Naive thymus-derived CD4-positive, alpha-beta T cell (primary cell): ENCODE measurements at regions of chr19 and their contacts with region 1.

Region 1: DNA sequence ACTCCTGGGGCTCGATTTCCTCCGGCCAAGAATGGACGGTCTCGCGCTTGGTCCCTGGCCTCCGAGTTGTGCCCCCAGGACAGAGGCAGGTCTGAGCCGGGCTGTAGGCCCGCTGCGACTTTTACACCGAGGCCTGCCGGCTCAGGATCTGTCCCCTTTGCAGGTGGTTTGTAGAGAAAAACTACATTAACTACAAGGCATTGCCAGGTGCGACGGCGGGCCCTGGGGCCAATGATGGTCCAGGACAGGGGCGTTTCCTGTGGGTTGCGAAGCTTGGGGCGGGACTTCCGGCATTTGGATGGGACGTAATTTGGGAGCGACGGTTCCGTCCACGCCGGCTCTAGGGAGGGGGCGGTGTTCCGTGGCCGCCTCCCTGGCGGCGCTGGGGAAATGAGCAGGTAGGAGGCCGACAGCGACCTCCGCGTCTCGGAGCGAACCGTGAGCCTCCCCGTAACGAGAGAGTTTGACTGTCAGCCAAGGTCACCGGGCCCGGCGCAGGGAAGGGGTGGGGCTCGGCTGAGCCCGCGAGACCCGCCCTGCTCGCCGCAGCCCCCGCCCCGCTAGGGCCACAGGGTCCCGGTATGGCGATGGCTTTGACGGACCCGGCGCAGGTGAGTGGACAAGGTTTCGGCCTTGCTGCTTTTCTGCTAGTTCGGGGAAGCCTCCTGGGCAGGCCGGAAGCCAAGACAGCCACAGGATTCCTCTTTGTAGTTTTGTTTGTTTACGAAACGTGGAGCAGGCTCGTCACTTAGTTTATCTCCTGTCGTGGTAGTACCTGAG is at the start of gene ZNF805:
- DNase-seq: peak; percentile 82 to 96 (median 93)
- ATAC-seq: peak; percentile 97
- H3K4me3 ChIP-seq: peak within 1 kb of the TSS; percentile 73
- H3K4me3 Mint-ChIP-seq: peak within 1 kb of the TSS; percentile 88 to 97 (median 94)
- H3K27ac ChIP-seq: peak within 1 kb of the TSS; percentile 95
- H3K27ac Mint-ChIP-seq: peak within 1 kb of the TSS; percentile 96 to 99 (median 97)
- H3K4me1 ChIP-seq: peaks cover 19% of the 10 kb centered on the region in 2 donors
- H3K4me1 Mint-ChIP-seq: peaks cover 20 to 44% (median 36%) of the 10 kb centered on the region in 7 donors
- H3K27me3 ChIP-seq: no peaks in the 10 kb centered on the region
- H3K27me3 Mint-ChIP-seq: peaks cover 0 to 3% (median 0%) of the 10 kb centered on the region in 5 donors
- total RNA-seq, gene ZNF805: 12.0 to 26.2 (median 23.7) TPM

Region 2: GRCh38 chr19:56567274-56568120 is 673.0 kb before region 1 on chr19 and contains the start of gene ZNF470:
- CTCF ChIA-PET with region 1: no interaction called
- POLR2A ChIA-PET with region 1: no interaction called
- intact Hi-C with region 1: loop called in 1 of 2 experiments (anchors 1 kb)
- DNase-seq: peak; percentile 73 to 86 (median 80)
- ATAC-seq: peak; percentile 98
- H3K4me3 ChIP-seq: peak within 1 kb of the TSS; percentile 86
- H3K4me3 Mint-ChIP-seq: peak within 1 kb of the TSS; percentile 89 to 98 (median 96)
- H3K27ac ChIP-seq: peak within 1 kb of the TSS; percentile 77
- H3K27ac Mint-ChIP-seq: peak within 1 kb of the TSS; percentile 59 to 91 (median 84)
- H3K4me1 ChIP-seq: peaks cover 0 to 9% of the 10 kb centered on the region in 2 donors
- H3K4me1 Mint-ChIP-seq: peaks cover 10 to 25% (median 13%) of the 10 kb centered on the region in 7 donors
- H3K27me3 ChIP-seq: no peaks in the 10 kb centered on the region
- H3K27me3 Mint-ChIP-seq: no peaks in the 10 kb centered on the region
- total RNA-seq, gene ZNF470: 0.98 to 5.9 (median 2.4) TPM

Region 3: DNA sequence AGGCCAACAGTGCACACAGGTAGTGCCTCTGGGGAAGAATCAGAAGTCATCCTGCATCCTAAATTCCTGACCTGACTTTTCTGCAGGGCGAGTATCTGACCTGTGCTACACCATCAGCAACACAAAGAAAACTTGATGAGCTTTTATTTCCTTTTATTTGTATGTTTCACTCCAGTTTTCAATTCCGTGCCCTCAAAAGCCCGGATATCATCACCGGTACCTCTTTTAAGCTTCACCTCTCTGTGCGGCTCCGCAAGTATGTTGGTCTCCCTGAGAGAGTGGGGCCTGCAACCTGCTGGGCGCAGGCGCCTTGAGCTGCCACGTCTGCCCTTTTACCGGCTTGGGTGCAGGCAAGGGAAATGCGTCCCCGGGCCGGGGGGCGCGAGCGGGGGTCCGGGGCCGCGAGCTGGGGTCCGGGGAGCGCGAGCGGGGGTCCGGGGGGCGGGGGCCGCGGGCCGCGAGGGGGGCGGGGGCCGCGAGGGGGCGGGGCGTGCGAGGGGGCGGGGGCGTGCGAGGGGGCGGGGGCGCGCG is 68.9 kb before region 1 on chr19:
- CTCF ChIA-PET with region 1: no interaction called
- POLR2A ChIA-PET with region 1: no interaction called
- intact Hi-C with region 1: no loop called
- DNase-seq: peak in 4 of 9 donors; percentile 16 to 58 (median 22)
- ATAC-seq: peak; percentile 79
- H3K4me3 ChIP-seq: peak overlapping the region; percentile 34
- H3K4me3 Mint-ChIP-seq: peak overlapping the region; percentile 42 to 81 (median 68)
- H3K27ac ChIP-seq: no peak overlapping the region
- H3K27ac Mint-ChIP-seq: peak overlapping the region in 4 of 9 donors; percentile 14 to 79 (median 66)
- H3K4me1 ChIP-seq: peaks cover 0 to 7% of the 10 kb centered on the region in 2 donors
- H3K4me1 Mint-ChIP-seq: peaks cover 3 to 19% (median 13%) of the 10 kb centered on the region in 7 donors
- H3K27me3 ChIP-seq: no peaks in the 10 kb centered on the region
- H3K27me3 Mint-ChIP-seq: peaks cover 0 to 49% (median 36%) of the 10 kb centered on the region in 5 donors

Region 4: DNA sequence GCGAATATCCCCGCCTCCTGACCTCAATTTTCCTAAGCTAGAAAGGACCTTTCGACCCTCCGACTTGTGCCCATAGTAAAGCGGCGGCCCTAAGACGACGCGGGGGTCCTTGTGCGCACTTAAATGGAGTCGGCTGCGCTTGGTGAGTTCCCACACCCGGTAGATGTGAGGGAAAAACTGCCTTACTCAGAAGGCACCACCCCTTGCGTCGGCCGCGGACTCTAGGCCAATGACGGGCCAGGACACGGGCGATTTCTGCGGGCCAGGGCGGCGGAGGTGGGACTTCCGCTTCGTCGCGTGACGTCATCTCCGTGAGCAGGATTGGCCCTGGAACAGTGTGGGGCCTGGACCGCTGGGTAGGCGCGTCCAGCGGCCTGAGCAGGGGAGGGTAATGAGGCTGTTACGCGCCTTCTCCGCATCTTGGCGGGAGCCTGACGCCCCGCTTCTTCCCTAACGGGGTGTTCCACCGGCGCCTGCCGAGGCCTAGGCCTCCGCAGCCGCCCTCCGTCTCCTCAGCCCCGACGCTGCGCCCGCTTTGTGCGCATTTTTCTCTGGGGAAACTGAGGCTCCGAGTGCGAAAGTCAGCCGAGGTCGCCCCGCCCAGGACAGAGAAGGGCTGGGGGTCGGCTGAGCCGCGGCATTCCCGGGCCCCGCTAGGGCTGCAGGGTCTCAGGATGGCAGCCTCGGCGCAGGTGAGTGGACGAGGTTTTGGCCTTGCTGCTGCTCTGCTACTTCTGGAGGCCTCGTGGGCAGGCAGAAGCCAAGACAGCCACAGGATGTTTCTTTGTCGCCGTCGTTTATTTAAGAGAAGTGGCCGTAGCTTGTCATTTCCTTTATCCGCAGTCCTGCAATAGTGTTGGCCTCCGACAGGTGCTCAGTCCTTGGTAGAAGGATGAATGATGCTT is 79.9 kb after region 1 on chr19 and contains the start of gene ZNF543:
- CTCF ChIA-PET with region 1: no interaction called
- POLR2A ChIA-PET with region 1: no interaction called
- intact Hi-C with region 1: loop called (anchors 1 kb)
- DNase-seq: peak; percentile 78 to 90 (median 84)
- ATAC-seq: peak; percentile 98
- H3K4me3 ChIP-seq: peak within 1 kb of the TSS; percentile 76
- H3K4me3 Mint-ChIP-seq: peak within 1 kb of the TSS; percentile 87 to 98 (median 94)
- H3K27ac ChIP-seq: peak within 1 kb of the TSS; percentile 83
- H3K27ac Mint-ChIP-seq: peak within 1 kb of the TSS; percentile 82 to 98 (median 96)
- H3K4me1 ChIP-seq: peaks cover 0 to 18% of the 10 kb centered on the region in 2 donors
- H3K4me1 Mint-ChIP-seq: peaks cover 14 to 30% (median 25%) of the 10 kb centered on the region in 7 donors
- H3K27me3 ChIP-seq: peaks cover 0 to 6% of the 10 kb centered on the region in 2 donors
- H3K27me3 Mint-ChIP-seq: peaks cover 20 to 31% (median 24%) of the 10 kb centered on the region in 5 donors
- total RNA-seq, gene ZNF543: 3.6 to 9.0 (median 8.0) TPM

Region 5: DNA sequence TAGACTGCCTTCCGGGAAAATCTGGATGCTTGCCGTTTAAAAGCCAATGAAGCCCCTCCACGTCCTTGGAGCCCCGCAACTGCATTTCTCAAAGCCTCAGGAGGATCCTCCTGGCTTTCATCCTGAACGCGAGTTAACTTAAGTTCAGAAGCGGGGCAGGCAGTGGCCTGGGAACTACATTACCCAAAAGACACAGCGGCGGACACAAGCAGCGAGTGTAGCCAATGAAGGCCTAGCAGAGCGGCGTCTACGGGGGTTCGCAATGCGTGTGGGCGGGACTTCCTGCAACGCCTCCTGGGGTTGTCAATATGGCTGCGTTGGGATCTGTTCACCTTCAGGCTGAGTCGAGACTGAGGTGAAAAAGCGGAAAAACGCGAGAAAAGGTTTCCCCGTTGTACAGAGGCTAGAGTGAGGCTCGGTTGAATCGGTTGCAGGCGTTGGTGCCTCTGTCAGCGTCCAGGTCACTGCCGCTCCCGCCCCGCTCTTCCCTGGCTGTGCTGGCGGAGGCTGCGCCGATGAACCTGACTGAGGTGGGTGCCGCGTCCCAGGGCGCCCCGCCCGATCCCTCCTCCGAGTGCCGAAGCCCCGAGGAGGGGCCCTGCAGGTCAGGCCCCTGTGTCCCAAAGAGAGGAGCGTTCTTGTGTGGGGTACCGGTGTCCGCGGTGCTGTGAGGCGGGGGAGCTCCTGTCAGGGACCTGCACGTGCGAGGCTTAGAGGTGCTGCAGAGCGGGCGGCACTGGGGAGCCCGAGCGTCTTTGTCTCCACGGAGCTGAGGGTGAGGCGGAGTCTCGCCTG is 170.6 kb after region 1 on chr19 and contains the start of gene ZNF17:
- CTCF ChIA-PET with region 1: no interaction called
- POLR2A ChIA-PET with region 1: no interaction called
- intact Hi-C with region 1: loop called in 1 of 2 experiments (anchors 1 kb)
- DNase-seq: peak; percentile 72 to 95 (median 88)
- ATAC-seq: peak; percentile 100
- H3K4me3 ChIP-seq: peak within 1 kb of the TSS; percentile 80
- H3K4me3 Mint-ChIP-seq: peak within 1 kb of the TSS; percentile 85 to 97 (median 96)
- H3K27ac ChIP-seq: peak within 1 kb of the TSS; percentile 80
- H3K27ac Mint-ChIP-seq: peak within 1 kb of the TSS; percentile 78 to 96 (median 92)
- H3K4me1 ChIP-seq: peaks cover 3 to 8% of the 10 kb centered on the region in 2 donors
- H3K4me1 Mint-ChIP-seq: peaks cover 20 to 46% (median 34%) of the 10 kb centered on the region in 7 donors
- H3K27me3 ChIP-seq: no peaks in the 10 kb centered on the region
- H3K27me3 Mint-ChIP-seq: no peaks in the 10 kb centered on the region
- total RNA-seq, gene ZNF17: 9.3 to 27.8 (median 17.2) TPM

Region 6: GRCh38 chr19:57632987-57633831 is 392.7 kb after region 1 on chr19 and contains the start of gene ZNF211:
- CTCF ChIA-PET with region 1: no interaction called
- POLR2A ChIA-PET with region 1: no interaction called
- intact Hi-C with region 1: loop called in 1 of 2 experiments (anchors 1 kb)
- DNase-seq: peak; percentile 74 to 89 (median 86)
- ATAC-seq: peak; percentile 100
- H3K4me3 ChIP-seq: peak within 1 kb of the TSS; percentile 87
- H3K4me3 Mint-ChIP-seq: peak within 1 kb of the TSS; percentile 87 to 97 (median 94)
- H3K27ac ChIP-seq: peak within 1 kb of the TSS; percentile 90
- H3K27ac Mint-ChIP-seq: peak within 1 kb of the TSS; percentile 81 to 97 (median 89)
- H3K4me1 ChIP-seq: peaks cover 3 to 13% of the 10 kb centered on the region in 2 donors
- H3K4me1 Mint-ChIP-seq: peaks cover 21 to 36% (median 28%) of the 10 kb centered on the region in 7 donors
- H3K27me3 ChIP-seq: no peaks in the 10 kb centered on the region
- H3K27me3 Mint-ChIP-seq: no peaks in the 10 kb centered on the region
- total RNA-seq, gene ZNF211: 18.0 to 56.7 (median 33.7) TPM

Region 7: DNA sequence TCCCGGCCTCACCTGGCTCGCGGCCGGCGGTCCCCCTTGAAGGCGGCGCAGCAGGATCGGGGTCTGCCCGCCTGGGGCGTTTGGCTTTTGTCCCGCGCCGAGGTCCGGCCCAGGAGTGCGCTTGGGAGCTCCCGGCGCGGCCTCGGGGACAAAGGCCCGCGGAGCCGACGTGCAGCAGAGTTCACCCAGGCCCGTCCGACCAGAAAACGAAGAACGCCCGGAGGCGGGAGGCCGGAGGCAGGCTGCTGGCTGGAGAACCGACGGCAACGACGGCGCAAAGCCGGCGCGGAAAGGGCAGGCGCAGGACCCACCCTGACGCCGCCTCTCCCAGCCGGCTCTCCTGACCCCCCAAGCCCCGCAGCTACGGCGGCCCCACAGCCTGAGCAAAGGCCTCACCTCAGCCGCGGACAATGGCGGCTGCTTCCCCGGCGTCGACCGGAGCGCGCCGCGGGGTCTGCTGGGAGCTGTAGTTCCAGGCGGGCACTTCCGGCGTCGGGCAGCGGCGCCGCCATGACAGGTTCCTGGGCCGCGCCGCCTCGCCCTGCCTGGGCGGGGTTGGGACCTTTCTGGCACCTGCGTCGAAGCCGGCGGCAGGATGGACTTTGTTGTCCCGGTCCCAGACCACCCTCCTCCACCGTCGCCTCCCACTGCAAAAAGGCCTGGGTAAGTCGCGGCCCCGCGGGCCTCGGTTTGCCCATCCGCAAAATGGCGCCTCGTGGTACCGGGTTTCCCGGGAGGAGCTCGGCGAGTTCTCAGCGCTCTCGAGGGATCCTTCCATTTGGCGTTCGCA is 762.1 kb after region 1 on chr19 and contains the start of gene ZNF606:
- CTCF ChIA-PET with region 1: no interaction called
- POLR2A ChIA-PET with region 1: interaction called, 4 read pairs
- intact Hi-C with region 1: loop called in 1 of 2 experiments (anchors 1 kb)
- DNase-seq: peak; percentile 79 to 87 (median 85)
- ATAC-seq: peak; percentile 100
- H3K4me3 ChIP-seq: peak within 1 kb of the TSS; percentile 91
- H3K4me3 Mint-ChIP-seq: peak within 1 kb of the TSS; percentile 80 to 90 (median 88)
- H3K27ac ChIP-seq: peak within 1 kb of the TSS; percentile 90
- H3K27ac Mint-ChIP-seq: peak within 1 kb of the TSS; percentile 79 to 94 (median 88)
- H3K4me1 ChIP-seq: peaks cover 14 to 18% of the 10 kb centered on the region in 2 donors
- H3K4me1 Mint-ChIP-seq: peaks cover 15 to 40% (median 27%) of the 10 kb centered on the region in 7 donors
- H3K27me3 ChIP-seq: no peaks in the 10 kb centered on the region
- H3K27me3 Mint-ChIP-seq: no peaks in the 10 kb centered on the region
- total RNA-seq, gene ZNF606: 11.9 to 37.5 (median 15.3) TPM